Activated naive CD4-positive, alpha-beta T cell treated with anti-CD3 and anti-CD28 coated beads for 36 hours (primary cell): ENCODE measurements at regions of chr11 and their contacts with region 1.

Region 1: GRCh38 chr11:30206249-30206996 is 24.4 kb upstream of the FSHB start:
- DNase-seq: no peak
- H3K4me3 Mint-ChIP-seq: no peak overlapping the region
- H3K27ac Mint-ChIP-seq: no peak overlapping the region
- H3K4me1 Mint-ChIP-seq: no peaks in the 10 kb centered on the region
- H3K27me3 Mint-ChIP-seq: peaks cover 2% of the 10 kb centered on the region

Region 2: DNA sequence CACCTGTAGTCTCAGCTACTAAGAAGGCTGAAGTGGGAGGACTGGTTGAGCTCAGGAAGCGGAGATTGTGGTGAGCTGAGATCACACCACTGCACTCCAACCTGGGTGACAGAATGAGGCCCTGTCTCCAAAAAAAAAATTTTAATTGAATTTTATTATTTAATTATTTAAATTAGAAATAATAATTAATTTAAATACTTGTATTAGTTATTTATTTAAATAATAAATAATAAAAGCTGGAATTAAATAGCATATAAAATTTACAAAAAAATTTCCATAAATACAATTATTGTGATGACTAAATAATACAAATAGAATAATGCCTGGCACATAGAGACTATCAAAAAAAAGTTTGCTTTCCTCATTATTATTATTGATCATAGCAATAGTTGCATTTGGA is 561.0 kb before region 1 on chr11:
- CTCF ChIA-PET with region 1: no interaction called
- intact Hi-C with region 1: no loop called
- DNase-seq: no peak
- H3K4me3 Mint-ChIP-seq: no peak overlapping the region
- H3K27ac Mint-ChIP-seq: no peak overlapping the region
- H3K4me1 Mint-ChIP-seq: no peaks in the 10 kb centered on the region
- H3K27me3 Mint-ChIP-seq: no peaks in the 10 kb centered on the region

Region 3: GRCh38 chr11:30186748-30187147 is 19.7 kb before region 1 on chr11:
- CTCF ChIA-PET with region 1: no interaction called
- intact Hi-C with region 1: no loop called
- DNase-seq: no peak
- H3K4me3 Mint-ChIP-seq: no peak overlapping the region
- H3K27ac Mint-ChIP-seq: no peak overlapping the region
- H3K4me1 Mint-ChIP-seq: no peaks in the 10 kb centered on the region
- H3K27me3 Mint-ChIP-seq: no peaks in the 10 kb centered on the region

Region 4: DNA sequence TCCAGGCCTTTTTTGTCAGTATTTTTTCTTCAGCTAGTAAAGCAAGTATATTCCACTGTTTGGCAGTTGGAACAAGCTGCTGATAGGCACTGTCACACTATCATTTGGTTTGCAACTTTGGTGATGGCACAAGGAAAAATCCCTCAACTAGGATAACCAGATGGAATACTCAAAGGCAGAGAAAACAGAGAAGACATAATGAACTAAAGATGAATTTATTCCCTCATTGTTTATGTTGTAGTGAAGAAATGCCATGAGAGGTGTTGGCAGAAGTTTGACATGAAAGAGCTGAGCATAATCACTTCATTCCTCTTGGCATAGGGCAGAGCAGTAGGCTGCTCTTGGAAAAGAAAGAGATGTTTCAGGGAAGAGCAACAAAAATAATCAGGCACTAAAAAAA is 64.2 kb after region 1 on chr11:
- CTCF ChIA-PET with region 1: no interaction called
- intact Hi-C with region 1: no loop called
- DNase-seq: no peak
- H3K4me3 Mint-ChIP-seq: no peak overlapping the region
- H3K27ac Mint-ChIP-seq: no peak overlapping the region
- H3K4me1 Mint-ChIP-seq: no peaks in the 10 kb centered on the region
- H3K27me3 Mint-ChIP-seq: peaks cover 19% of the 10 kb centered on the region

Region 5: GRCh38 chr11:30333405-30333804 is 127.0 kb after region 1 on chr11:
- CTCF ChIA-PET with region 1: no interaction called
- intact Hi-C with region 1: loop called (anchors 10 kb)
- DNase-seq: no peak
- H3K4me3 Mint-ChIP-seq: no peak overlapping the region
- H3K27ac Mint-ChIP-seq: no peak overlapping the region
- H3K4me1 Mint-ChIP-seq: peaks cover 17% of the 10 kb centered on the region
- H3K27me3 Mint-ChIP-seq: no peaks in the 10 kb centered on the region